ENCODE measurements at regions of chr7 and their contacts with region 1.

Region 1: DNA sequence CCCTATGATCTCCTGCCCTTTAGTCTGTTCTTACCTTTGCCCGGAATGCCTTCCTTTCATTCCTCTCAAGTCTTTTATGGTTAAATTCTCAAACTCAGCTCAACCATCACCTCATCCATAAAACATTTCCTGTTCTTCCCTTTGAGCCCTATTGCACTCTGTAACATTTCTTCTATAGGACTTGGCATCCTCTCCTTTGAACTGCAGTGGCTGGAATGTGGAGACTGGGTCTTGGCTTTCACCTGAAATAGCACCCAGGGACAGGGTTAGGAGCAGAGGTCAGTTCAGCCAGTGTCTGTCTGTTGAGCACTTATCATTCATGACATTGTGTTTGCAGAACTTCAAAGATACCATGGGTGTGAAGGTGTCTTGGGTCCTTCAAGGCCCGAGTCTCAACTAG is 7.2 kb downstream of the NFE2L3 start:
- DNase-seq: no peak
- ATAC-seq: no peak
- H3K4me3 ChIP-seq: no peak overlapping the region
- H3K4me3 Mint-ChIP-seq: no peak overlapping the region
- H3K27ac ChIP-seq: no peak overlapping the region
- H3K27ac Mint-ChIP-seq: no peak overlapping the region
- H3K4me1 ChIP-seq: peaks cover 23% of the 10 kb centered on the region
- H3K4me1 Mint-ChIP-seq: peaks cover 36% of the 10 kb centered on the region
- H3K27me3 ChIP-seq: no peaks in the 10 kb centered on the region
- H3K27me3 Mint-ChIP-seq: no peaks in the 10 kb centered on the region
- CTCF ChIP-seq: no peak

Region 2: DNA sequence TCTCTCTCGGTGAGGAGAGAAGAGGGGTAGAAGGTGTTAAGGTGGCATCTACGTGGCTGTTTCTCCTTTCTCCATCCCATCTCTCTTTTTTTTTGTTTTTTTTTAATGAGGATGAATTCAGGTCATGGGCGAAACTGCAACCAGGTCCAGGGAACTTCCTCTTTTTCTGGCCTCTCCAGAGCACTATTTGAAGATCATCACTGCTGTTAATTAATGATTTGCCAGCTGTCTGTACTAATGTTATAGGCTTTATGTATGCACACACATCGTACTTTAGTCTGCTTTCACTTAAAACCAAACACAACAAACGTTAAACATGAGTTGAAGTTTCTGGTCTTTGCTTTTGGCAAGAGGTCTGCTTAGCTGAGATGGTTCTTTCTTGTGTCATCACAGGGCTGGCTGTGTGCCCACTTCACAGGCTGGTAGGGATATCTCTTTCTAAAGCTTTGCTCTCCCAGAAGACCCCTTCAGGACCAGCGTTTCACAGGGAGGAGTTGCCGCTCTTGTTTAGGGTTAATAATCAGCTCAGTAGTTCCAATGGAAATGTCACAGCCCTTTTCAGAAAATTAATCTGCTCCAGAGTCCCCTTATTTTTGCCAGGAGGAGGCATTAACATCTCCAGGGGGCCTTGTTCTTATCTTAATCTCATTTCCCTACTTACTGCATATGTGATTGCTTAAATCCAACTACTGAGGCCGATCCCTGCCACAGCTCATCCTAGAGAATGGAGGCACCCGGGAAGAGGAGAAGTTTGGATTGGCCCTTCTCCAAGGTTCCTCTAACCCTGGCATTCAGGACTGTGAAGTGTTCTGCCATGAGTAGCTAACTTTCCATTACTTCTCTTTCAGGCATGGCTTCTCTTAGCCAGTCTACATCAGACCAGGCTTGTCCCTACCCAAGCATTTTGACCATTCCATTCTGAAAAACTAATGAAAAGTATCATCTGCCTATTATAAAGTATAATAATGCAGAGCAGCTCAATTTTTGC is 281.1 kb before region 1 on chr7:
- CTCF ChIA-PET with region 1: no interaction called
- POLR2A ChIA-PET with region 1: no interaction called
- intact Hi-C with region 1: no loop called
- DNase-seq: no peak
- ATAC-seq: no peak
- H3K4me3 ChIP-seq: no peak overlapping the region
- H3K4me3 Mint-ChIP-seq: no peak overlapping the region
- H3K27ac ChIP-seq: no peak overlapping the region
- H3K27ac Mint-ChIP-seq: no peak overlapping the region
- H3K4me1 ChIP-seq: no peaks in the 10 kb centered on the region
- H3K4me1 Mint-ChIP-seq: no peaks in the 10 kb centered on the region
- H3K27me3 ChIP-seq: peaks cover 0 to 6% of the 10 kb centered on the region in 2 experiments
- H3K27me3 Mint-ChIP-seq: peaks cover 53% of the 10 kb centered on the region
- CTCF ChIP-seq: no peak

Region 3: GRCh38 chr7:26187380-26188205 is 28.4 kb after region 1 on chr7:
- CTCF ChIA-PET with region 1: interaction called, 9 read pairs
- POLR2A ChIA-PET with region 1: interaction called, 4 read pairs
- intact Hi-C with region 1: loop called in 1 of 2 experiments (anchors 2 kb)
- DNase-seq: peak in 1 of 9 experiments; percentile 38
- ATAC-seq: peak; percentile 9
- H3K4me3 ChIP-seq: no peak overlapping the region
- H3K4me3 Mint-ChIP-seq: no peak overlapping the region
- H3K27ac ChIP-seq: peak overlapping the region in 1 of 2 experiments; percentile 14
- H3K27ac Mint-ChIP-seq: peak overlapping the region; percentile 76
- H3K4me1 ChIP-seq: peaks cover 43% of the 10 kb centered on the region
- H3K4me1 Mint-ChIP-seq: peaks cover 79% of the 10 kb centered on the region
- H3K27me3 ChIP-seq: no peaks in the 10 kb centered on the region
- H3K27me3 Mint-ChIP-seq: no peaks in the 10 kb centered on the region
- CTCF ChIP-seq: no peak

Measured in CD8-positive, alpha-beta T cell (primary cell).